ENCODE measurements at regions of chr3 and their contacts with region 1.

Region 1: DNA sequence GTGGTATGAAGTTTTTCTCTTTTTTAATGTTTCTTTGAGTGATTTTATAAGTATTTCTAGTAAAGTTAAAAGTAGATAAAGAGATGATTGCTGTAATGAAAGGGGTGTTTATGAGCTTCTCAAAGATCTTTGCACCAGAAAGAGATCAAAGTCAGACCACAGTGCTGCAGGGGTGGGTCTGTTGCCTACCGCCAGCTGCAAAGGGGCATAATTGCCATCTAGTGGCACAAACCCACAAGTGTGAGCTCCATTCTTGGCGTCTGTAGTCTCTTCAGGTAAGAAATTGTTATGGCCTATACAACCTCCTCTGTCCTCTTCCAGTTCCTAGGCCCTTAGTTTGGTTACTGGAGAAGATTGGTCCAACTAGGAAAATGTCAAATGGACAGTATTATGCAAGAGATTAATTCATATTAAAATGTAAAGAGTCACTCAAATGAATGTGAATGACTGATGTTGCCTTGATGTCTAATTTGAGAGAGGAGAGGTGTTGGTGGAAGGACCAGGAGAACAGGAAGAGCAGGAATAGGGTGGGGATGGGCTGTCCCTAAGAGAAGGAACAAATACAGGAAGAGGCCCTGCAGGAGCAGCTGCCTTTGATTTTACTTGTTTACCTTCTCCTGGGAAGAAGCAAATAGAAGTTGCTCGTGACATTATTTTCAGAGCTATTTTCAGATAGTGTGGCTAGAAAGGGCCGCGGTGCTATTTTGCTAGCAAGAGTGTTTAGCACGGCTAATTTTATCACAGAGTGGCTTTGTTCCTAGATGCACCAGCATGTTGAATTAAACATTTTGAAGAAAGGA is 53.0 kb upstream of the GSK3B start:
- DNase-seq: peak; percentile 39
- ATAC-seq: peak; percentile 84
- H3K4me3 ChIP-seq: peak overlapping the region; percentile 18 to 42 (median 37)
- H3K27ac ChIP-seq: no peak overlapping the region
- H3K4me1 ChIP-seq: peaks cover 72% of the 10 kb centered on the region
- H3K27me3 ChIP-seq: no peaks in the 10 kb centered on the region; a peak in 1 of 5 replicates
- CTCF ChIP-seq: peak; percentile 68
- EP300 ChIP-seq: peak in 1 of 2 experiments; percentile 53; a peak in 1 of 4 replicates
- POLR2A ChIP-seq: no peak
- RAD21 ChIP-seq: peak; percentile 47; the same call in 1 of the 2 replicates

Region 2: GRCh38 chr3:119891944-119892721 is 255.1 kb before region 1 on chr3:
- CTCF ChIA-PET with region 1: no interaction called
- POLR2A ChIA-PET with region 1: no interaction called
- in situ Hi-C with region 1: no loop called
- intact Hi-C with region 1: loop called (anchors 1 kb)
- DNase-seq: peak; percentile 55
- ATAC-seq: peak; percentile 73
- H3K4me3 ChIP-seq: no peak overlapping the region
- H3K27ac ChIP-seq: no peak overlapping the region
- H3K4me1 ChIP-seq: no peaks in the 10 kb centered on the region
- H3K27me3 ChIP-seq: no peaks in the 10 kb centered on the region
- CTCF ChIP-seq: peak; percentile 67
- EP300 ChIP-seq: no peak
- POLR2A ChIP-seq: no peak
- RAD21 ChIP-seq: peak; percentile 55; the same call in 1 of the 2 replicates

Region 3: DNA sequence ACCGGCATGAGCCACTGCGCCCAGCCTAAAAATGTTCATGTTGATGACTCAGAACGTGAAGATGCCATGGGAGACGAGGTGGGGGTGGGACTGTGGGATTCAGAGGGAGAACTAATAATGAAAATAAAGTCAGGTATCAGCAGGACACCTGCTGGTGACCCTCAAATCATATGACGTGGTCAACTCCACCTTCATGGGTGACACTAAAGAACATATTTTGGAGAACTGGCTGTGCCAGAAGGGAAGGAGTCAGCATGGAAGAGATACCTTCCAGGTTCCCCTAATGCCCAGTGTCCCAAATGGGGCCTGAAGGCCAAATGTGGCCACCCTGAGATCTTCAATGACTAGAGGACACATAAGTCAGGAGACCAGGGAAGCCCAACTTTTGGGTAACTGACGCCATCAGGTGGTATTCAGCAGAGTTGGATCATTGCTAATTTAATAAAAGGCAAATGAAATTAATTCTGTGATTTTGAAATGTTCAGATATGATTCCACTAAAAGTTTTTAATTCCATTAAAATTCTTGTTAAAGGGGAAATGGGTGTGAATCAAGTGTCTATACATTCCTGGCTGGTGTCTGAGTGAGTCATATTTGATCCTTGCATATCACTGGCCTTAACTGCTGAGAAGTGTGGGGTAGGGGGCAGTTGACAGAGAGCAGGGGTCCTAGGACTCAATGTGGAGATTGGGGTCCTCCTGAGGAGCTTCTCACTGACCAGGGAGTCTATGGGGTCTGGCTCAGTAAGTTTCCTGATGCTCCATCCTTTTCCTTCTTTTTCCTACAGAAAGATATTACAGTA is 35.7 kb after region 1 on chr3:
- CTCF ChIA-PET with region 1: no interaction called
- POLR2A ChIA-PET with region 1: no interaction called
- in situ Hi-C with region 1: no loop called
- intact Hi-C with region 1: no loop called
- DNase-seq: no peak
- ATAC-seq: no peak
- H3K4me3 ChIP-seq: no peak overlapping the region
- H3K27ac ChIP-seq: no peak overlapping the region
- H3K4me1 ChIP-seq: peaks cover 25% of the 10 kb centered on the region
- H3K27me3 ChIP-seq: no peaks in the 10 kb centered on the region
- CTCF ChIP-seq: peak; percentile 49
- EP300 ChIP-seq: no peak
- POLR2A ChIP-seq: no peak
- RAD21 ChIP-seq: no peak

Region 4: GRCh38 chr3:120357807-120358206 is 210.5 kb after region 1 on chr3:
- CTCF ChIA-PET with region 1: no interaction called
- POLR2A ChIA-PET with region 1: no interaction called
- in situ Hi-C with region 1: no loop called
- intact Hi-C with region 1: no loop called
- DNase-seq: no peak
- ATAC-seq: 0 out of 3 replicates have a peak, but pooled peaks have one; percentile 29
- H3K4me3 ChIP-seq: no peak overlapping the region
- H3K27ac ChIP-seq: no peak overlapping the region
- H3K4me1 ChIP-seq: no peaks in the 10 kb centered on the region
- H3K27me3 ChIP-seq: peaks cover 0 to 7% of the 10 kb centered on the region in 2 experiments; a peak in 2 of 5 replicates
- CTCF ChIP-seq: peak; percentile 16; the same call in 1 of the 2 replicates
- EP300 ChIP-seq: no peak
- POLR2A ChIP-seq: no peak
- RAD21 ChIP-seq: no peak

Region 5: GRCh38 chr3:120475722-120476377 is 328.6 kb after region 1 on chr3:
- CTCF ChIA-PET with region 1: no interaction called
- POLR2A ChIA-PET with region 1: no interaction called
- in situ Hi-C with region 1: no loop called
- intact Hi-C with region 1: no loop called
- DNase-seq: no peak
- ATAC-seq: no peak
- H3K4me3 ChIP-seq: no peak overlapping the region
- H3K27ac ChIP-seq: no peak overlapping the region
- H3K4me1 ChIP-seq: no peaks in the 10 kb centered on the region
- H3K27me3 ChIP-seq: peaks cover 1 to 9% of the 10 kb centered on the region in 2 experiments; a peak in 2 of 5 replicates
- CTCF ChIP-seq: no peak
- EP300 ChIP-seq: no peak
- POLR2A ChIP-seq: no peak
- RAD21 ChIP-seq: no peak